Motor neuron (in vitro differentiated cells): ENCODE measurements at regions of chr1 and their contacts with region 1.

Region 1: GRCh38 chr1:71521655-71522264 is 440.9 kb upstream of the ZRANB2 start:
- ATAC-seq: peak in 7 of 8 experiments; percentile 44 to 78 (median 63)
- H3K4me3 ChIP-seq: no peak overlapping the region
- H3K27ac ChIP-seq: no peak overlapping the region
- H3K4me1 ChIP-seq: no peaks in the 10 kb centered on the region

Region 2: GRCh38 chr1:71203241-71203640 is 318.5 kb before region 1 on chr1:
- in situ Hi-C with region 1: loop called in 3 of 9 experiments (anchors 10 to 25 kb)
- ATAC-seq: no peak
- H3K4me3 ChIP-seq: no peak overlapping the region
- H3K27ac ChIP-seq: no peak overlapping the region
- H3K4me1 ChIP-seq: peaks cover 3 to 29% of the 10 kb centered on the region in 2 donors

Region 3: GRCh38 chr1:71222668-71223067 is 299.1 kb before region 1 on chr1:
- in situ Hi-C with region 1: loop called in 2 of 9 experiments (anchors 25 kb)
- ATAC-seq: no peak
- H3K4me3 ChIP-seq: no peak overlapping the region
- H3K27ac ChIP-seq: no peak overlapping the region
- H3K4me1 ChIP-seq: peaks cover 0 to 32% of the 10 kb centered on the region in 2 donors